ENCODE measurements at regions of chr15 and their contacts with region 1.

Region 1: GRCh38 chr15:91224755-91225380 is 124.8 kb downstream of the SV2B start:
- DNase-seq: peak in 1 of 4 donors; percentile 53
- ATAC-seq: peak; percentile 81
- H3K4me3 ChIP-seq: no peak overlapping the region
- H3K27ac ChIP-seq: no peak overlapping the region
- H3K4me1 ChIP-seq: no peaks in the 10 kb centered on the region
- H3K27me3 ChIP-seq: peaks cover 0 to 24% of the 10 kb centered on the region in 2 donors
- CTCF ChIP-seq: peak; percentile 49 to 66

Region 2: DNA sequence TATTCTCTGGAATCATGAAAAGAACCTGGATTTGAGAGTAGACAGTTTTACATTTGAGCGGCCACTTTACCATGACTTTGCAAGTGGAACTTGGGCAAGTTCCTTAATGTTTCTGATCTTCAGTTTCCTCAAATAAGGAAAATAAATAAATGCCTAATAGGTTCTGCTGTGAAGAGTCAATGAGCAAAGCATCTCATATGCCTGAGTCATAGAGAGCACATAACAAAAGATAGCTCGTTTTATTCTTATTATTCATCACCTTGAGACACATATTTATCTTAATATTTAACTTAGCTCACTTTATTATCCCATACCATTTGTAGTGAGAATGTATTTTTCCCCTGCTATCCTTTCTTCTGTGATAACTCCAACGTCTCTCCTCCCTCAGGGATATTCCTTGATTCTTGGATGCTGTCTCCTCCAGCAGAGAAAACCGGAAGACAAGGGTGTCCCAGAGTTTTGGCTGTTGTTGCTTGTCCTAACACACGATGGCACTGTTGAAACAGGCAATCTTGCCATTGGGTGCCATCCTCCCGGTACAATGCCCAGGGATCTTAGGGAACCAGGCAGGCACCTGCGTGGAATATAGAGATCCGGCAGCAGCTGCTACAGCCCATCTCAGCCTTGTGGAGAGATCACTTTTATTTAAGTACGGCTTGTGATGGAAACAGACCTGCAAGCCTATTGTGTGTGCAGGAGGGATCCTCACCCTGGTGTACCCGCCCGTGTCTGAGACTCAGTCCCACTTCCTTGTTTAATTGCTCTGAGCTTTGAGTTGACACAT is 169.1 kb before region 1 on chr15:
- intact Hi-C with region 1: loop called in 1 of 2 experiments (anchors 5 kb)
- DNase-seq: peak in 3 of 4 donors; percentile 36 to 64 (median 40)
- ATAC-seq: peak; percentile 97
- H3K4me3 ChIP-seq: no peak overlapping the region
- H3K27ac ChIP-seq: no peak overlapping the region
- H3K4me1 ChIP-seq: peaks cover 0 to 3% of the 10 kb centered on the region in 2 donors
- H3K27me3 ChIP-seq: peaks cover 12 to 72% of the 10 kb centered on the region in 2 donors
- CTCF ChIP-seq: peak; percentile 53 to 66